Heart left ventricle (tissue), 16 donors: ENCODE measurements at regions of chr1 and their contacts with region 1.

Region 1: DNA sequence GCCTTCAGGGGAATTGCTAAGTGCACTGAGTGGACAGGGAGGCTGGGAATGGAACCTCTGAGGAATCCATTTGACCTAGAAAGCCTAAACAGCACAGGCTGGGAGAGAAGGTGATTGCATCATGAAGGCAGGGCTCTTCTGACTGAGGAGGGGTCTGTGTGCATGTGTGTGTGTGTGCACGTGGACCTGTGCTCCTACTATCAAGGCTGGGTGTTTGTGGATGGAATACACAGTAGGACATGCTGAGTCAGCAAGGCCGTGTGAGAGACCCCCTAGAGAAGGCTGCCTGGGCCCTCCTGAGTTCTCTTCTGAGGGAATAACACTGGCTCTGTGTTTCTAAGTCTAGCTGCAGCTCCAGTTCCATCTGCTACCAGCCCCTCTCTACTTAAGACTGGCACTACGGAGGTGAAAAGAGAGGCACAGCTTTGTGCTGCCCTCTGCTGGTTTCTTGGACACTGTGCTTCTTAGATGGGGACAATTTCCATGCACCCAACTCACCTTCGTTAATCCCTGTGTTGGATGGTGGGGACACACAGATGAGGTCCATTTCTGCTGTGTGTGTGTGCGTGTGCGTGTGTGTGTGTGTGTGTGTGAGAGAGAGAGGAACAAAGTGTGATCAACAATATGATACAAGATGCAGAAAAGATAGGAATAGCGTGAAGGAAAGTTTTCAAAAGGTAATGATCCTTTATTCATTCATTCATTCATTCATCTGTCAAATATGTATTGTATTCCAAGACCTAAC is 6.2 kb upstream of the EFCAB14 start:
- DNase-seq: peak in 4 of 5 donors; percentile 61 to 73 (median 69)
- ATAC-seq: peak; percentile 75 to 93 (median 92)
- H3K4me3 ChIP-seq: no peak overlapping the region
- H3K27ac ChIP-seq: peak overlapping the region in 1 of 12 donors; percentile 57
- H3K4me1 ChIP-seq: peaks cover 0 to 18% (median 7%) of the 10 kb centered on the region in 12 donors
- H3K27me3 ChIP-seq: peaks cover 0 to 23% (median 0%) of the 10 kb centered on the region in 9 donors
- CTCF ChIP-seq: peak; percentile 70 to 86 (median 81)
- POLR2A ChIP-seq: no peak

Region 2: DNA sequence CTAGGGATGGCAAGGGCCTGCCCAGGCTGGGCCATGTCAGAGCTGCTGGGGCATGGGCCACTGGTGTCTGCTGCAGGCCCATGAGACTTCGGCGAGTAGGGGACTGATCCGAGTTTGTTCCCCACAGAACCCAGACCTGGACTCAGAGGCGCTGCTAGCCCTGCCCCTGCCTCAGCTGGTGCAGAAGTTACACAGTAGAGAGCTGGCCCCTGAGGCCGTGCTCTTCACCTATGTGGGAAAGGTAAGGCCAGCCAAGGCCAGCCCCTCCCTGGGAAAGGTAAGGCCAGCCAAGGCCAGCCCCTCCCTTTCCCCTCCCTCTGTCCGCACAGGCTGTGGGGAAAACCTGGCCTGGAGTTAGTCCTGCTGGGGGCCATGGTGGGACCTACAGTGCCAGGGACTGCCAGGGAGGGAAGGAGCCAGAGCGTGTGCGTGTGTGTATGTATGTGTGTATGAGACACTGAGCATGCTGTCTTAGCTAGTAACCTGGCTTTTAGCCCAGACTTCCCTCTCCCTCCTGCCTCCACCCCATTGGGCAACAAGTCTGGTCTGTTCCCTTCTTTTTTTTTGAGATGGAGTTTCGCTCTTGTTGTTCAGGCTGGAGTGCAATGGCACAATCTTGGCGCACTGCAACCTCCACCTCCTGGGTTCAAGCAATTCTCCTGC is 323.1 kb before region 1 on chr1:
- intact Hi-C with region 1: loop called in 2 of 10 experiments (anchors 5 to 10 kb)
- DNase-seq: peak in 4 of 5 donors; percentile 40 to 60 (median 44)
- ATAC-seq: peak; percentile 40 to 78 (median 68)
- H3K4me3 ChIP-seq: no peak overlapping the region
- H3K27ac ChIP-seq: no peak overlapping the region
- H3K4me1 ChIP-seq: peaks cover 0 to 37% (median 6%) of the 10 kb centered on the region in 12 donors
- H3K27me3 ChIP-seq: no peaks in the 10 kb centered on the region
- CTCF ChIP-seq: no peak
- POLR2A ChIP-seq: no peak

Region 3: GRCh38 chr1:46442317-46443161 is 282.6 kb before region 1 on chr1:
- intact Hi-C with region 1: loop called in 7 of 10 experiments (anchors 2 to 10 kb)
- DNase-seq: peak; percentile 54 to 82 (median 70)
- ATAC-seq: peak; percentile 67 to 79 (median 75)
- H3K4me3 ChIP-seq: peak overlapping the region in 10 of 12 donors; percentile 17 to 58 (median 46)
- H3K27ac ChIP-seq: peak overlapping the region in 1 of 12 donors; percentile 43
- H3K4me1 ChIP-seq: peaks cover 0 to 15% (median 0%) of the 10 kb centered on the region in 12 donors
- H3K27me3 ChIP-seq: peaks cover 0 to 19% (median 6%) of the 10 kb centered on the region in 9 donors
- CTCF ChIP-seq: peak; percentile 80 to 94 (median 90)
- POLR2A ChIP-seq: no peak

Region 4: GRCh38 chr1:46477153-46477929 is 247.8 kb before region 1 on chr1:
- intact Hi-C with region 1: loop called in 3 of 10 experiments (anchors 2 to 10 kb)
- DNase-seq: peak; percentile 52 to 83 (median 61)
- ATAC-seq: peak in 3 of 4 donors; percentile 66 to 86 (median 77)
- H3K4me3 ChIP-seq: no peak overlapping the region
- H3K27ac ChIP-seq: no peak overlapping the region
- H3K4me1 ChIP-seq: no peaks in the 10 kb centered on the region
- H3K27me3 ChIP-seq: peaks cover 0 to 81% (median 38%) of the 10 kb centered on the region in 9 donors
- CTCF ChIP-seq: peak; percentile 75 to 90 (median 83)
- POLR2A ChIP-seq: no peak

Region 5: GRCh38 chr1:46527474-46528296 is 197.5 kb before region 1 on chr1:
- intact Hi-C with region 1: loop called in 9 of 10 experiments (anchors 2 to 5 kb)
- DNase-seq: peak; percentile 71 to 86 (median 76)
- ATAC-seq: peak; percentile 68 to 88 (median 80)
- H3K4me3 ChIP-seq: no peak overlapping the region
- H3K27ac ChIP-seq: no peak overlapping the region
- H3K4me1 ChIP-seq: peaks cover 0 to 9% (median under 1%) of the 10 kb centered on the region in 12 donors
- H3K27me3 ChIP-seq: peaks cover 0 to 68% (median 17%) of the 10 kb centered on the region in 9 donors
- CTCF ChIP-seq: peak; percentile 82 to 94 (median 90)
- POLR2A ChIP-seq: no peak

Region 6: DNA sequence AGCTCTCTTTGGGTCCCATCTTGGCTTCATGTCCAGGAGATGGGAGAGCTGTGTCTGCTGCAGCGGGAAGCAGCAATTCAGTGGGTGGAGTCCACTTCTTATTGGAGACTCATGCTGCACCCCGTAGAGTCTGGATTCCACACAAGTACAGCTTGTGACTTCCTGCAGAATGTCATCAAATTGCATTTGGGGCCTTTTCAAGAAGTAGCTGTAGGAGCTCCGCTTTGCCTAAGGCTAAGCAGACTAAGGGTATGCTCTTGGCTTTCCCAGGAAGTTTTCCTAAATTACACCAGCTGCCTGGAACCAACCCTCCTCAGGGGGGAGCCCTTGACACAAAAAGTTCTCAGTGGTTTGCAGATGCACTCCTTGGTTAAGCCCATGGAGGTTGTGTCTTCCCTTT is 102.8 kb before region 1 on chr1:
- intact Hi-C with region 1: loop called in 7 of 10 experiments (anchors 1 to 5 kb)
- DNase-seq: no peak
- ATAC-seq: peak in 2 of 4 donors; percentile 34 to 48
- H3K4me3 ChIP-seq: no peak overlapping the region
- H3K27ac ChIP-seq: no peak overlapping the region
- H3K4me1 ChIP-seq: peaks cover 0 to 23% (median 13%) of the 10 kb centered on the region in 12 donors
- H3K27me3 ChIP-seq: no peaks in the 10 kb centered on the region
- CTCF ChIP-seq: peak; percentile 24 to 52 (median 37)
- POLR2A ChIP-seq: no peak

Region 7: DNA sequence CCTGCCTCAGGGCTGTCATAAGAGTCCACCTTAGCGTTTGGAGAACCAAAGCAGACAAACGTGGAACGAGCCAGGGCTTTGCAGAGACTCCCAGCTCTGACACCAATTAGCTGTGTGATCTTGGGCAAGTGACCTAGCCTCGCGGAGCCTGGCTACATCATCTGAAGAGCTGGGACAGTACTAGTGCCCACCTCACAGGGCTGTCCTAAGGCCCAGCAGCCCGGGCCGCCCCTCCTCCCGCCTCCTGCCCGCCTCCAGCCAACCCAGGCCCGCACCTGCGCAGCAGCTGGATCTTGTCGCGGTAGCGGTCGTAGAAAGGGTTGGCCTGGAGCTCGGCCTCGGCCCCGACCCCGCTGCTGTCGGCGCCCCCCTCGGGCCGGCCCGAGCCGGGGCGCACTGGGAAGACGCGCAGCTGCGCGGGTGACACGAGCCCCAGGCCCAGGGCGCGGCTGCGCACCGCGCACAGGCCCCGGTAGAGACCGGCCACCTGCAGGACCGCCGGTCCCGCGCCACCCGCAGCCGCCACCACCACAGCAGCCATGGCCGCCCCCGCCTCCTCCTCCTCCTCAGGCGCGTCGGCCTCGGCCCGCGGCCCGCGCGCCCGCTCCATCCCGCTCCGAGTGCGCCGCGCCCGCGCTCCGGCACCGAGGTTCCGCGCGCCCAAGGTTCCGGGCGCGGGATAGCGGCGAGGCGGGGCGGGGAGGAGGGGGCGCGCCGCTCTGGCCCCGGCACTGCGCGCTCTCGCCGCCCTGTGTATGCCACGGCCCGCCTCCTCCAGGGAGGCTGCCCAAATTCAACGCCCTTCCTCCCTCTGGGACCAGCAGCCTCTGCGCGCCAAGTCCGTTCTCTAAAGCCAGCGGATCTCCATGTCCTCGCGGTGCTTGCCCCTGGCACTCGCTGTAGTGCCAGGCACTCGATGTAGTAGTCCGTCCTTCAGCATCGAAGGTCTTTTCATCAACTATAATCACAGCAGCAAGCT is 57.1 kb before region 1 on chr1 and contains the start of gene ATPAF1:
- intact Hi-C with region 1: loop called in 1 of 10 experiments (anchors 5 kb)
- DNase-seq: peak; percentile 71 to 86 (median 80)
- ATAC-seq: peak; percentile 73 to 94 (median 90)
- H3K4me3 ChIP-seq: peak within 1 kb of the TSS; percentile 66 to 98 (median 92)
- H3K27ac ChIP-seq: peak within 1 kb of the TSS; percentile 74 to 92 (median 83)
- H3K4me1 ChIP-seq: peaks cover 4 to 31% (median 22%) of the 10 kb centered on the region in 12 donors
- H3K27me3 ChIP-seq: no peaks in the 10 kb centered on the region
- CTCF ChIP-seq: peak in 1 of 12 donors; percentile 5
- POLR2A ChIP-seq: peak in 1 of 2 donors; percentile 42
- total RNA-seq, gene ATPAF1: 147 to 237 (median 179) TPM

Region 8: GRCh38 chr1:46812065-46812963 is 87.2 kb after region 1 on chr1:
- intact Hi-C with region 1: no loop called
- DNase-seq: peak in 3 of 5 donors; percentile 29 to 61 (median 57)
- ATAC-seq: peak in 3 of 4 donors; percentile 8 to 74 (median 59)
- H3K4me3 ChIP-seq: no peak overlapping the region
- H3K27ac ChIP-seq: peak overlapping the region in 8 of 12 donors; percentile 34 to 76 (median 68)
- H3K4me1 ChIP-seq: peaks cover 3 to 35% (median 18%) of the 10 kb centered on the region in 12 donors
- H3K27me3 ChIP-seq: no peaks in the 10 kb centered on the region
- CTCF ChIP-seq: no peak
- POLR2A ChIP-seq: no peak